ENCODE measurements at regions of chr12 and their contacts with region 1.

Region 1: DNA sequence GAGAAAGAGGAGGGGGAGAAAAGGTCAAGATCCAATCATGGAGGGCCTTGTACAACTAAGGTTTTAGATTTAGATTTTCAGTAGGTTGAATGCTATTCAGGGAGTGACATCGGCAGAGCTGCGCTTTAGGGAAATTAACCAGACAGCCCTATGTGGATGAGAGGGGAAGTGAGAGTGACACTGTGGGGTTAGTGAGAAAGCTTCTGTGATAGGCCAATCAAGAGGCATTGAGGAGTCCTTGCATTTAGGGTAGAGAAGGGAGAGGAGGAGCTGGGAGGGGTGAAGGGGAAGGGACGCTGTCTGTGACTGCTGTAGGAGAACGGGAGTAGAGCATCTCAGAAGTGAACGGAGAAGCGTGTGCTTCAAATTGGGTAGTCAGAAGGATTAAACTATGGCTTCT is 3.4 kb downstream of the HSD17B6 start:
- DNase-seq: no peak
- ATAC-seq: peak; percentile 30 to 57 (median 41)
- H3K4me3 ChIP-seq: peak overlapping the region in 2 of 3 donors; percentile 62 to 72
- H3K27ac ChIP-seq: peak overlapping the region; percentile 41 to 85 (median 81)
- H3K4me1 ChIP-seq: peaks cover 0 to 45% (median 18%) of the 10 kb centered on the region in 4 donors
- H3K27me3 ChIP-seq: no peaks in the 10 kb centered on the region
- CTCF ChIP-seq: no peak
- POLR2A ChIP-seq: no peak

Region 2: GRCh38 chr12:56922031-56922430 is 155.5 kb after region 1 on chr12:
- intact Hi-C with region 1: no loop called
- DNase-seq: no peak
- ATAC-seq: no peak
- H3K4me3 ChIP-seq: no peak overlapping the region
- H3K27ac ChIP-seq: no peak overlapping the region
- H3K4me1 ChIP-seq: peaks cover 0 to 8% (median 3%) of the 10 kb centered on the region in 4 donors
- H3K27me3 ChIP-seq: no peaks in the 10 kb centered on the region
- CTCF ChIP-seq: no peak
- POLR2A ChIP-seq: no peak

Region 3: DNA sequence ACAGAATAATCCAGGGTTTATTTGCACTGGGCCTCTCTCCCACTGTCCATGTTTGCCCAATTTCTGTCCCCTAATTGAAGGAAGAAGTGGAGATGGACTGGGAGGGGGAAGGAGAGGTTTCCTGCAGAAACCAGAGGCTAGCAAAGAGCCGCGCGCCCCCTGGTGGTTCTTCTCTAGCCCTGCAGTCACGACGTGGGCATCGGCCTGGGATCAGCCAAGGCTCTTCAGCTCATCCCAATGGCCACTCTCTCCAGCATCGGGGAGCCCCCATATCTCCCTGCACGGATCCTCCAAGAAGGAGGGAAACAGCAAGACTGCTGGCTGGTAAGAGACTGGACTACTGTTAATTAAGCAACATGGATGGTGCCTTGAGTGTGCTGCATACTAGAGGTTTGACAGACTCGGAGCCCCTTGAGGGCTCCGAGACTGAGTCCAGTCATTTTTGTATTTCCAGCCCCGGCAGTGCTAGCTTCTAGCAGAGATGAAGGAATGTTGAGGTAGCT is 221.1 kb after region 1 on chr12:
- intact Hi-C with region 1: loop called (anchors 5 to 10 kb)
- DNase-seq: peak; percentile 84 to 90 (median 90)
- ATAC-seq: peak; percentile 83 to 86 (median 85)
- H3K4me3 ChIP-seq: no peak overlapping the region
- H3K27ac ChIP-seq: peak overlapping the region in 1 of 3 donors; percentile 15
- H3K4me1 ChIP-seq: peaks cover 0 to 39% (median 12%) of the 10 kb centered on the region in 4 donors
- H3K27me3 ChIP-seq: no peaks in the 10 kb centered on the region
- CTCF ChIP-seq: peak; percentile 94 to 97 (median 94)
- POLR2A ChIP-seq: no peak

Measured in right lobe of liver (tissue), 6 donors.